ENCODE measurements at regions of chr11 and their contacts with region 1.

Region 1: DNA sequence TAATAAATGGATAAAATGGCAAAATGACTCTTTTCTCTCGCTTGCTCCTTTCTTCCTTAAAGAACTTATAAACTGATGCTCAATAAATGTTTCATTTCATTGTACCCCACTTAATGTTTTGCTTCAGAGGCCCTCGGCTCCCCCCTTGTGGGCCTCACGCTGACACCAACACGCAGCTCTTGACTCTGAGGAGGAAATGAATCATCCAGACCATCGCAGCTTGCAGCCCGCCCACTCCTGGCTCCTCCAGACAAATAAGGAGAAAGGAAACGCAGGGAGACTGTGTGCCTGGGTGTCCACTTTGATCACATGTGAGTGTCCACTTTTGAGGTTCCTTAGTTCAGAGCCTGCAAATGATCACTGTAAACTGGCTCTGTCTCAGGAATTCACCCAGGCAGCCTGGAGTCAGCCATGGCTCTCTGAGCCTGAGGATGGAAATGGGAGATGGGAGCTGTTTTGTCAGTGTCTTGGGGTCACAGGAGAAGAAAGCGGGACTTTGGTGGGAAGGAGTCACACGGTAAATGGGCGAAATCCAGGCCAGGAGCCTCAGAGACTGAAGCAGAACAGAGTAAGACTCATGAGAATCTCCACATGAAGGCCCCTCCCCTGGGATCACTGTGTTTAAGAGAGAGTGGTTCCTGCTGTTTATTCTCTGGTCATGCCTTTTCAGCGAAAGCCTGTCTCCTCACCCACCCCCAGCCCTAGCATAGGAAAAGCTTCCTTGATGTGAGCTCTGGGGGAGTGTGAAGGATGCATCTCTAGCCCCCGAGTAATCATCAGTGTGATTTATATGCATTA is 96.5 kb downstream of the CWC15 start:
- ATAC-seq: peak; percentile 96 to 100 (median 100)
- H3K4me3 ChIP-seq: no peak overlapping the region
- H3K27ac ChIP-seq: peak overlapping the region; percentile 36 to 44
- H3K4me1 ChIP-seq: peaks cover 13 to 18% of the 10 kb centered on the region in 2 donors

Region 2: DNA sequence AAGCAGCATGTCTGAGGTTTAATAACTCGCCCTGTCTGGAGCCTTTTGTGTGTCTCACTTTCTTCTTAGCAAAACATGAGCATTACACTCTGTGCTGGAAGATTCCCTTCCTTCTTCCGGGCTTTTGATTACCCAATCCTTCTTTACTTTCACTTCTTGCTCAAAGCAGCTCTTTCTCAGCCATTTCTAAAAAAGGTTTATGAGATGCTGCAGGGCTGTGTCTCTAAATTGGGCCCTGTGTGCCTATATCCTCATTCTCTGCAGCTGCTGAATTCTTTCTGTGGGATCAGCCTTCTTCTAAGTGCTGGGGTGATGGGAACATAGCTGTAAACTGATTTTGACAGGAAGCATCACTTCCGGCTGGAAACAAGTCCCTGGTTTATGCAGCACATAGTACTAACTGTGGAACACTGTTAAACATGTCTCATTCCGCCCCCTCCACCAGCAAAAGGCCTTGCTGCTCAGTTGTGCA is 237.9 kb before region 1 on chr11:
- in situ Hi-C with region 1: loop called in 1 of 9 experiments (anchors 25 kb)
- ATAC-seq: peak in 3 of 8 experiments; percentile 36 to 82 (median 64)
- H3K4me3 ChIP-seq: no peak overlapping the region
- H3K27ac ChIP-seq: no peak overlapping the region
- H3K4me1 ChIP-seq: no peaks in the 10 kb centered on the region

Region 3: DNA sequence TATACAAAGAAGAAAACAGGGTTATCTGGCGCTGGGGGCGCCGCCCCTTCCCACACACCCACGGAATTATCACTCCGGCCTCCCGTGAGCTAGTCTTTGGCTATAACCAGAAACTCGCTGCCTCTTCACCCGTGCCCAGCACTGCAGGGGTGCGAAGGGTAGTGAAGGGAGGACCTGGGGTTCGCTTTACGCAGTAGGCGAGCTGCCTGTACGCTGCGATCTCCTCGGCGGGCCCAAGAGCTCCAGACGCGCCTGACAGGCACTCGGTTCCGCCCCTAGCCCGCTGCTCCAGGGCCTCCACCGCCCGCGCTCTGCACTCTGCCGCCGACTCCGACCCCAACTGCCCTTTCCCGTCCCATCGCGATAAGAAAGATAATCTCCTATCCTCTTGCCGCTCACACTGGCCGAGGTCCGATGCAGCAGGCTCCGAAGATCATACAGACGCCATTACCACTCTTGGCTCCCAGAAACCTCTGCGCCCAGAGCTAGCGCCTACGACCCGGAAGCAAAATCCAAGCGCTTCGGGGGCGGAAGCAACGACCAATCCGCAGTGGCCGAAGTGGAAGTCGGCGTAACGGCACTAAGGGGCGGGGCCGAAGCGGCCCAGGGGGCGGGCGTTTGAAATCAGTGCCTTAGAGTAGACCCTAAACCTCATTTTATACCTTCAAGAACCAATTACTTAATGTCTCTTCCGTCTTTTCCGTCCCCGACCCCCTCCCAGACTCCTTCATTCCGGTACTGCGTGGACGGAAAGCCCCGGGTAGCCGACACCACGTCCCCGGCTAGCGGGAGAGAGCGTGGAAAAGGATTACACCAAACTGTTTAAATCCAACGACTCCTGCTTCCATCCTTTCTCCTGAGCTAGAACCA is 96.5 kb after region 1 on chr11 and contains the starts of genes CWC15 and KDM4D:
- in situ Hi-C with region 1: no loop called
- ATAC-seq: peak; percentile 98 to 99 (median 99)
- H3K4me3 ChIP-seq: peak within 1 kb of the TSS; percentile 60 to 98 (median 69)
- H3K27ac ChIP-seq: peak within 1 kb of the TSS; percentile 72 to 83
- H3K4me1 ChIP-seq: peaks cover 4 to 10% of the 10 kb centered on the region in 2 donors
- total RNA-seq, gene CWC15: 43.7 to 77.1 (median 60.1) TPM
- total RNA-seq, gene KDM4D: 0.97 to 3.9 (median 2.3) TPM